ENCODE measurements at regions of chr6 and their contacts with region 1.

Region 1: DNA sequence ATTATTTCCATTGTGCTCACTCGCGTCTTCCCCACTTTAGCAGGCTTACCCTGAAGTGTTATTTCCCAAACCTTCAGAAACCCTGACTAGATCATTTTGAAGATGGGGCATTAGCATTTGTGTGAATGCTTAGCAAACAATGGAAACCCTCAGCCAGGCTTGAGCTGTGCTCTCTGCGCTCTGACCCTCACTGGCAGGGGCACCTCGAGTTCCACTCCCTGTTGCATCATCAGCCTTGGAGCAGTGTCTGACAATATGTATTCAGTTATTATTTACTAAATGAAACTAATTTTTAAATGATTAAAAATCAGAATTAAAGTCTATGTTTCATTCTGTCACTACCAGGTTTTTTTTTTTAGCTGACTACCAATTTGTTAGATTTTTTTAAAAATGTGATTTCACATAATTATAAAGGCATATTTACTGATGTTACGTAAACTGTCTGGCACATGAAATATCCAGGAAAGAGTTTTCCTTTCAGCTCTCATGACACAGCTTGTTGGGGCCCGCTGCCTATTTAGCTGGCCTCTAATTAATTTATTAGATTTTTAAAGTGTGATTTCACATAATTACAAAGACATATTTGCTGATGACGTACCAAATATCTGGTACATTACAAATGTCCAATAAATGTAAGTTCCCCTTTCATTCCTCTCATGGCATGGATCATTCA is 155.2 kb downstream of the PACRG start:
- DNase-seq: no peak
- H3K4me3 ChIP-seq: no peak overlapping the region
- CTCF ChIP-seq: no peak
- POLR2A ChIP-seq: no peak

Region 2: DNA sequence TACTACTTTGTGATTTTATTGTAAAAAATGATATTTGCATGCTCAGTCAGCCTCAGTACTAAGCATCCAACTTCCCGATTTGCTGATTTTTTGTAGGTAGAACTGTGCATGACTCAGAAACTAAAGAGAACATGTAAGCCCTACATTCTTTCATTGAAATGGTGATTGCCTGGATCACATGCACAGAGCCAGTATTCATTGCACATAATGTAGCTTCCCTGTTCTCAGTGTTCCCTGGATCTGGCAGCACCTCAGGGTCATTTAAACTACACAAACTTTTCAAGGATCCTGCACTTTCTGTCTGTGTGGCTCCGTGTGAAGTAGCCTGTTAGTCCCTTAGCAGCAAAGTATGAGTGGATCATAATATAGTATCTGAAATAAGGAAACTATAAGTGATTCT is 1186.1 kb before region 1 on chr6:
- intact Hi-C with region 1: no loop called
- DNase-seq: no peak
- H3K4me3 ChIP-seq: no peak overlapping the region
- CTCF ChIP-seq: no peak
- POLR2A ChIP-seq: no peak

Region 3: DNA sequence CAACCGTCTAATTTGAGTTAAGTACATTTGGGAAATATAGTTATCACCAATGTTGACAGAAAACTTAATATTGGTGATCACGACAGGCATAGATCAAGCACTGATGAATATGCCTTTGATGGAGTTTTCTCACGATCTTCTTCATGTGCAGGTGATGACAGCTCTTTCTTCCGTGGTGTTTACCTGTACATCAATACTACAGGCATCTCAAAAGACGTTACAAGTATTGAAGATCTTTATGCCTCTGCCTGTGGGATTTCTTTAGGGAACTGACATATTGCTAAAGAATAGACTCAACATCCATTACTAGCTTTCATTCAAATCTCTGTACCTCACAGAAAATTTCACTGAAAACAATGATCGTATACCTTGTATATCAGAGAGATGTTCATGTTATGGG is 23.5 kb after region 1 on chr6:
- intact Hi-C with region 1: loop called (anchors 1 kb)
- DNase-seq: no peak
- H3K4me3 ChIP-seq: no peak overlapping the region
- CTCF ChIP-seq: no peak
- POLR2A ChIP-seq: no peak

Region 4: DNA sequence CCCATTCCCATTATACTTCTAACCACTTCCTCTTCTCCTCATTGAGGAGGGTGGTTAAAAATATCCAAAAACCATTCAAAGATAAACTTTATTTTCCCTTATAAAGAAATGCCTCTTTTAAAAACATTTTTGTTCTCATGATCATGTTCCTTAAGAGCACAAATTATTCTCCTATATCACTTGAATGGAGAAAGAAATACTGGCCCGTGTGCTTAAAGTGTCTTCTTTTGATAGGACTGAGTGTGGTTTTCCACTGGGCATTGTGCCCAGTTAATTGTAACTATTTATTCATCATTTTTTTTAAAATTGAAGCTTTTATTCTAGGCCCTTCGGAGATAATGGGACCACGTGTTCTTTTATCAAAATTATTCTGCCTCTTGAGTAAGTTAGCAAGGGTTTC is 1403.1 kb after region 1 on chr6:
- intact Hi-C with region 1: no loop called
- DNase-seq: no peak
- H3K4me3 ChIP-seq: no peak overlapping the region
- CTCF ChIP-seq: no peak
- POLR2A ChIP-seq: no peak